ENCODE measurements at regions of chr12 and their contacts with region 1.

Region 1: GRCh38 chr12:113683574-113684384 is 212.1 kb upstream of the LHX5 start:
- DNase-seq: no peak
- H3K4me3 ChIP-seq: no peak overlapping the region
- H3K27ac ChIP-seq: no peak overlapping the region
- H3K4me1 ChIP-seq: no peaks in the 10 kb centered on the region
- CTCF ChIP-seq: no peak

Region 2: DNA sequence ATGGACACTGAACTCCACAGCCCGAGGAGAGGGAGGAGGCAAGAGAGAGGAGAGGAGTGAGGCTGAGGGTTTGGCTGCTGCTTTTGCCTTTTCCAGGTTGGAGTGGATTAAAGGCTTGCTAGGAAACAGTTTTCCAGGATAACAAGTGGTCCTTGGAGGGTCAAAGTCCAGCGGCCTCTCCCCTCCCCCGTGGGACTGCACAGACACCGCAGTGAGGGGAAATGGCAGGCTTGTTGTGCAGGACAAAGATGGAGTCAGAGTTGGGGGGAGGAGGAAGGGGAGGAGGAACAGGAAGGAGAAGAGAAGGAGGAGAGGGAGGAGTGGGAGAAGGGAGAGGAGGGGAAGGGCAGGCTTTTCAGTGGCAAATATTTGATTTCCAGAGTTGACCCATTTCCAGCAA is 36.9 kb after region 1 on chr12:
- CTCF ChIA-PET with region 1: no interaction called
- POLR2A ChIA-PET with region 1: interaction called, 14 read pairs
- intact Hi-C with region 1: no loop called
- DNase-seq: no peak
- H3K4me3 ChIP-seq: no peak overlapping the region
- H3K27ac ChIP-seq: no peak overlapping the region
- H3K4me1 ChIP-seq: no peaks in the 10 kb centered on the region
- CTCF ChIP-seq: no peak